ENCODE measurements at regions of chr13 and their contacts with region 1.

Region 1: GRCh38 chr13:109786457-109787134 is at the start of gene IRS2:
- DNase-seq: peak; percentile 84
- ATAC-seq: peak; percentile 63
- H3K4me3 ChIP-seq: peak within 1 kb of the TSS; percentile 70
- H3K27ac ChIP-seq: no peak within 1 kb of the TSS
- H3K4me1 ChIP-seq: peaks cover 14% of the 10 kb centered on the region
- H3K27me3 ChIP-seq: no peaks in the 10 kb centered on the region
- CTCF ChIP-seq: no peak
- total RNA-seq, gene IRS2: 5.6 and 7.5 TPM in 2 replicates

Region 2: GRCh38 chr13:108961542-108962125 is 825.0 kb before region 1 on chr13:
- CTCF ChIA-PET with region 1: no interaction called
- POLR2A ChIA-PET with region 1: no interaction called
- intact Hi-C with region 1: loop called (anchors 2 kb)
- DNase-seq: peak; percentile 67
- ATAC-seq: peak; percentile 48
- H3K4me3 ChIP-seq: no peak overlapping the region
- H3K27ac ChIP-seq: no peak overlapping the region
- H3K4me1 ChIP-seq: 0 out of 2 replicates have a peak, but pooled peaks cover 6% of the 10 kb centered on the region
- H3K27me3 ChIP-seq: no peaks in the 10 kb centered on the region
- CTCF ChIP-seq: peak; percentile 83

Region 3: GRCh38 chr13:109654341-109655205 is 132.0 kb before region 1 on chr13:
- CTCF ChIA-PET with region 1: no interaction called
- POLR2A ChIA-PET with region 1: no interaction called
- intact Hi-C with region 1: no loop called
- DNase-seq: no peak
- ATAC-seq: no peak
- H3K4me3 ChIP-seq: no peak overlapping the region
- H3K27ac ChIP-seq: no peak overlapping the region
- H3K4me1 ChIP-seq: peaks cover 1% of the 10 kb centered on the region; the same call in 1 of the 2 replicates
- H3K27me3 ChIP-seq: no peaks in the 10 kb centered on the region
- CTCF ChIP-seq: no peak

Region 4: GRCh38 chr13:109743706-109744453 is 42.7 kb before region 1 on chr13:
- CTCF ChIA-PET with region 1: no interaction called
- POLR2A ChIA-PET with region 1: no interaction called
- intact Hi-C with region 1: loop called (anchors 5 kb)
- DNase-seq: peak; percentile 87
- ATAC-seq: peak; percentile 94
- H3K4me3 ChIP-seq: peak overlapping the region; percentile 25; the same call in 1 of the 2 replicates
- H3K27ac ChIP-seq: peak overlapping the region; percentile 47
- H3K4me1 ChIP-seq: peaks cover 21% of the 10 kb centered on the region
- H3K27me3 ChIP-seq: no peaks in the 10 kb centered on the region
- CTCF ChIP-seq: no peak

Region 5: DNA sequence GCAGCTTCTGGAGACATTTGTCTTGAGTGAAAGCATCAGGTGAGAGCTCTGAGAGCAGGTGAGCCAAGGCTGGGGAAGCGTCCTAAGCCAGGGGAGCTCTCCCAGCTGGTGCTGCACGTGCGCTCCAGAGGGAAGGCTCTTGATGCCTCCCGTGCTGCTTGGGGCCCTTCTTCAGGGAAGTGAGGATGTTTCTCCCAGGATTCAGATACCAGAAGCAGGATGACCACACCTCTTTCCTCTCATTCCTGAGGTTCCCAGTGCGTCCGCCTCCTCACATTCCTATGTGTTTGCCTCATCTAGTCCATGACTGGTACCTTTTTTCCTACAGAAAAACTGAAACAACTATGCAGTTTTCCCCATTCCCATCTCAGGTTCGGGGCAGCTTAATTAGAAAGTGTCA is 230.8 kb after region 1 on chr13:
- CTCF ChIA-PET with region 1: no interaction called
- POLR2A ChIA-PET with region 1: interaction called, 17 read pairs
- intact Hi-C with region 1: no loop called
- DNase-seq: peak; percentile 88
- ATAC-seq: peak; percentile 81
- H3K4me3 ChIP-seq: no peak overlapping the region; the same call in 1 of the 2 replicates
- H3K27ac ChIP-seq: peak overlapping the region; percentile 99
- H3K4me1 ChIP-seq: peaks cover 60% of the 10 kb centered on the region
- H3K27me3 ChIP-seq: no peaks in the 10 kb centered on the region
- CTCF ChIP-seq: no peak

Region 6: GRCh38 chr13:110108347-110109174 is 322.0 kb after region 1 on chr13:
- CTCF ChIA-PET with region 1: interaction called, 3 read pairs
- POLR2A ChIA-PET with region 1: no interaction called
- intact Hi-C with region 1: loop called (anchors 2 kb)
- DNase-seq: peak; percentile 80
- ATAC-seq: peak; percentile 91
- H3K4me3 ChIP-seq: no peak overlapping the region
- H3K27ac ChIP-seq: no peak overlapping the region
- H3K4me1 ChIP-seq: peaks cover 14% of the 10 kb centered on the region
- H3K27me3 ChIP-seq: no peaks in the 10 kb centered on the region
- CTCF ChIP-seq: peak; percentile 78

Region 7: GRCh38 chr13:110187641-110188161 is 401.1 kb after region 1 on chr13:
- CTCF ChIA-PET with region 1: no interaction called
- POLR2A ChIA-PET with region 1: no interaction called
- intact Hi-C with region 1: no loop called
- DNase-seq: peak; percentile 79
- ATAC-seq: peak; percentile 68
- H3K4me3 ChIP-seq: no peak overlapping the region
- H3K27ac ChIP-seq: peak overlapping the region; percentile 67
- H3K4me1 ChIP-seq: peaks cover 12% of the 10 kb centered on the region
- H3K27me3 ChIP-seq: no peaks in the 10 kb centered on the region
- CTCF ChIP-seq: no peak

Measured in PC-3 (cell line).